Posterior vena cava (tissue), 2 donors: ENCODE measurements at regions of chr17 and their contacts with region 1.

Region 1: GRCh38 chr17:62167076-62167475 is 102.0 kb upstream of the MED13 start:
- DNase-seq: no peak

Region 2: DNA sequence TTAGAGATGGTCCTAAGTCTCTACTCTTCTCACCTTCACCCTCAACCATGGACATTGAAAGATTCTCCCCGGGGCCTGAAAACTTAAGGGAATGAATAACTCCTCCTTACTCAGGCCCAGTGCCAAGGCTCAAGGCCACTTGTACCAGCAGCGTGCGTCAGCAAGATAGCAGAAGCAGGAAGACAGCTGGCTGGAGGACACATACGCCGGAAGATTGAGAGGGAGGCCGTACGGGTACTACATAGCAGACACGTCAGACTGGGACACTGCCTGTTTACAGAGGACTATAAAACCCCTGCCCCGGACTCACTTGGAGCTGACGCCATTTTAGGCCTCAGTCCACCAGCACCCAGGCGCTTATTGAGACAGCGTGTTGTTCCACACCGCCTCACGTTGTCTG is 26.2 kb before region 1 on chr17:
- intact Hi-C with region 1: loop called in 1 of 2 experiments (anchors 1 kb)
- DNase-seq: no peak

Region 3: DNA sequence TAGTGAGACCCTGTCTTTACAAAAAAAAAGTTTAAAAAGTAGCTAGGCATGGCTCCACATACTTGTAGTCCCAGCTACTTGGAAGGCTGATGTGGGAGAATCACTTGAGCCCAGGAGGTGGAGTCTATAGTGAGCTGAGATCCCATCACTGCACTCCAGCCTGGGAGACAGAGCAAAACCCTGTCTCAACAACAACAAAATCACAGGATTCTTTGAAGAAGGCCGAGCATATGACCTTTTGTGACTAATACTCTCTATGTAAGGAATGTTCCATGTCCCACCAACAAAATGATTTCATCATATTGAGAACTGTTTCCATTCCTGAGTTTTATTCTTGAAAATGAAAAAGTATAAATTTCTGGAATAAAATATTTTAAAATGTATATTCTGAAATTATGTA is 154.4 kb after region 1 on chr17:
- intact Hi-C with region 1: no loop called
- DNase-seq: no peak

Region 4: DNA sequence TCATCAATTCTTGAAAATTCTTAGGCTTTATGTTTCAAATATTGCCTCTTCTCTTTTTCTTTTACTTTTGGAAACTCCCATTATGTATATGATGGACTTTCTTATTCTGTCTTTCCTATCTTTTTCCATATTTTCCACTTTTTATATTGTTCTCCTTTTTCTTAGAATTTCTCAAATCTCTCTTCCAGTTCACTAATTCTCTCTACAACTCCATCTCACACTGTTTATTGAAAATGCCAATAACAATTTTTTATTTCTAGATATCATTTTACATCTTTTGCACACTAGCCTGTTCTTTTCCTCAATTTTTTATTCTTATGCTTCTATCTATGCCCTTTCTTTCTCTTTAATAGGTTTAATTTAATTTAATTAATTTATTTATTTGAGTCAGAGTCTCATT is 169.5 kb after region 1 on chr17:
- intact Hi-C with region 1: no loop called
- DNase-seq: no peak

Region 5: DNA sequence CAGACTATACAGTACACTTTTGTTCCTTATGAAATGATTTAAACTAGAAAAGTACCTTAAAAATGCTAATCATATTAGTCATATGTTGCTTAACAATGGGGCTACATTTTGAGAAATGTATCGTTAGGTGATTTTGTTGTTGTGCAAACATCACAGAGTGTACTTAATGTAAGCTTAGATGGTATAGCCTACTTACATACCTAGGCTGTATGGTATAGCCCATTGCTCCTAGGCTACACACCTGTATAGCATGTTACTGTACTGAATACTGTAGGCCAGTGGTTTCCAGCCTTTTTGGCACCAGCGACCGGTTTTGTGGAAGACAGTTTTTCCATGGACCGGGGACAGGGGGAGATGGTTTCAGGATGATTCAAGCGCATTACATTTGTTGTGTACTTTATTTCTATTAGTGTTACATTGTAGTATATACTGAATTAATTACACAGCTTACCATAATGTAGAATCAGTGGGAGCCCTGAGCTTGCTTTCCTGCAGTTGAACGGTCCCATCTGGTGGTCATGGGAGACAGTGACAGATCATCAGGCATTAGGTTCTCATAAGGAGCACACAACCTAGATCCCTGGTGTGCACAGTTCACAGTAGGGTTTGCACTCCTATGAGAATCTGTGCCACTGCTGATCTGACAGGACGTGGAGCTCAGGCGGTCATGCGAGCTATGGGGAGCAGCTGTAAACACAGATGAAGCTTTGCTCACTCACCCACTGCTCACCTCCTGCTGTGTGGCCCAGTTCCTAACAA is 425.4 kb after region 1 on chr17:
- intact Hi-C with region 1: no loop called
- DNase-seq: no peak